CD4-positive, alpha-beta memory T cell (primary cell): ENCODE measurements at regions of chr7 and their contacts with region 1.

Region 1: DNA sequence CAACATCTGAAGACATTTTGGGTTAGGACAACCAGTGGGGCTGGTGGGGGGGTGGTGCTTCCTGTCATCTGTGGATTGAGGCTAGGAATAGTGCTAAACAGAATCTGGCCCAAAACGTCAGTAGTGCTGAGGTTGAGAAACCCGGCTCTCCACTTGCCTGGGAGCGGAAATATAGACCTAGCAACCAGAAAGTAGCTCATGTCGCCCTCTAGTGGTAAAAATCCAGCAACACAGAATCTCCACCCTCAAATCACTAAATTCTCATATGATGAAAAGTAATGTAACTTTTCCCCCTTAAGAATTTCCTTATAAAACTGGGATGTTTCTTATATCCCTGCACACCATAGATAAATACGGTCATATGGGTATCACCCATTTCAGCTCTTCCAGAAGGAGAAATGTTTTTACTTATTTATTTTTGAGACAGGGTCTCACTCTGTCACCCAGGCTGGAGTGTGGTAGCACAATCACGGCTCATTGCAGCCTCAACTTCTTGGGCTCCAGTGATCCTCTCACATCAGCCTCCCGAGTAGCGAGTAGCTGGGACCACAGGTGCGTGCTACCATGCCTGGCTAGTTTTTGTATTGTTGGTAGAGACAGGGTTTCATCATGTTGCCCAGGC is 34.4 kb downstream of the ZC3HAV1 start:
- DNase-seq: peak; percentile 77 to 84 (median 80)
- H3K4me3 ChIP-seq: no peak overlapping the region
- H3K4me3 Mint-ChIP-seq: peak overlapping the region; percentile 53 to 75 (median 58)
- H3K27ac ChIP-seq: peak overlapping the region; percentile 27
- H3K27ac Mint-ChIP-seq: peak overlapping the region; percentile 86 to 91 (median 88)
- H3K4me1 ChIP-seq: peaks cover 61% of the 10 kb centered on the region
- H3K4me1 Mint-ChIP-seq: peaks cover 38 to 82% (median 59%) of the 10 kb centered on the region in 4 donors
- H3K27me3 ChIP-seq: no peaks in the 10 kb centered on the region
- H3K27me3 Mint-ChIP-seq: no peaks in the 10 kb centered on the region

Region 2: GRCh38 chr7:139043823-139044812 is 31.0 kb before region 1 on chr7:
- CTCF ChIA-PET with region 1: interaction called, 15 read pairs
- POLR2A ChIA-PET with region 1: interaction called, 4 read pairs
- intact Hi-C with region 1: loop called (anchors 2 kb)
- DNase-seq: peak; percentile 60 to 92 (median 68)
- H3K4me3 ChIP-seq: no peak overlapping the region
- H3K4me3 Mint-ChIP-seq: peak overlapping the region in 6 of 8 donors; percentile 51 to 77 (median 65)
- H3K27ac ChIP-seq: peak overlapping the region; percentile 15
- H3K27ac Mint-ChIP-seq: peak overlapping the region; percentile 57 to 93 (median 86)
- H3K4me1 ChIP-seq: peaks cover 61% of the 10 kb centered on the region
- H3K4me1 Mint-ChIP-seq: peaks cover 47 to 81% (median 61%) of the 10 kb centered on the region in 4 donors
- H3K27me3 ChIP-seq: no peaks in the 10 kb centered on the region
- H3K27me3 Mint-ChIP-seq: no peaks in the 10 kb centered on the region

Region 3: GRCh38 chr7:139086454-139086853 is 11.3 kb after region 1 on chr7:
- CTCF ChIA-PET with region 1: interaction called, 30 read pairs
- POLR2A ChIA-PET with region 1: interaction called, 244 read pairs
- intact Hi-C with region 1: no loop called
- DNase-seq: no peak
- H3K4me3 ChIP-seq: no peak overlapping the region
- H3K4me3 Mint-ChIP-seq: peak overlapping the region in 5 of 8 donors; percentile 13 to 87 (median 38)
- H3K27ac ChIP-seq: peak overlapping the region; percentile 6
- H3K27ac Mint-ChIP-seq: peak overlapping the region in 6 of 7 donors; percentile 67 to 92 (median 84)
- H3K4me1 ChIP-seq: peaks cover 95% of the 10 kb centered on the region
- H3K4me1 Mint-ChIP-seq: peaks cover 55 to 94% (median 79%) of the 10 kb centered on the region in 4 donors
- H3K27me3 ChIP-seq: no peaks in the 10 kb centered on the region
- H3K27me3 Mint-ChIP-seq: no peaks in the 10 kb centered on the region

Region 4: DNA sequence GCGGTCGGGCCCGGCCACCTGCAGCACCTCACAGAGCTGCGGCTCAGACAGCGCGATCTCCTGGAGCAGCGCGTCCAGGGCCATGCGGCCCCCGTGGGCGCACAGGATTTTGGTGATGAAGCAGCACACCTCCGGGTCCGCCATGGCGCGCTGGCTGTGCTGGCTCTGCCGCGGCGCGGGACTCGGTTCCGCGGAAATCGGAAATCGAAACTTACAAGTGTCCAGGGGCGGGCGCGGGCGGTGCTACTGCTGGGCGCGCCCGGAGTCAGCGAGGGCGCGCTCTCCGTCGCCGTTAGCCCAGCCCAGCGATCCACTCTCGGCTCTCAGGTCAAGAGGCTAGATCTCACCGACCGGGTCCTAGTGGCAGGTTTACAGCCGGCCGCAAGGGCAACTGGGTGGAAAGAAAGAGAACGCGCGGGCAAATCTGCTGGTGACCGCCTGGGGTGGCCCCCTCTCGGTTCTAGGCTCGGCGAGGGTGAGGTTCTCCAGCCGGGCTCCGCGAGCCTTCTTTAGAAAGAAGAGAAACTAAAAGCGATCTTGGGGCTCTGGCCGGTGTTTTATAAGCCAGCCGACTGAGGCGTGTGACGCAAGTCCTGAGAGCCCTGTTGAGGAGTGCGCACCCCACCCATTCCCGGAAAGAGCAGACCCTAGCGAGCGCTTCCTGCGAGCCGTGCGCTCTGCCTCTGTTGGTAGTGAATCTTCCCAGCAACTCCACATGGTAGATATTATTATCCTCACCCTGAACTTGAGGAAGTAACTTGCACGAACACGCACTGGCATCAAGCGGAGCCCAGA is 34.2 kb after region 1 on chr7 and contains the start of gene ZC3HAV1:
- CTCF ChIA-PET with region 1: interaction called, 15 read pairs
- POLR2A ChIA-PET with region 1: interaction called, 23 read pairs
- intact Hi-C with region 1: loop called (anchors 1 kb)
- DNase-seq: peak; percentile 89 to 94 (median 93)
- H3K4me3 ChIP-seq: peak within 1 kb of the TSS; percentile 90 to 96
- H3K4me3 Mint-ChIP-seq: peak within 1 kb of the TSS; percentile 95 to 99 (median 97)
- H3K27ac ChIP-seq: peak within 1 kb of the TSS; percentile 96
- H3K27ac Mint-ChIP-seq: peak within 1 kb of the TSS; percentile 88 to 100 (median 99)
- H3K4me1 ChIP-seq: peaks cover 29% of the 10 kb centered on the region
- H3K4me1 Mint-ChIP-seq: peaks cover 28 to 59% (median 38%) of the 10 kb centered on the region in 4 donors
- H3K27me3 ChIP-seq: no peaks in the 10 kb centered on the region
- H3K27me3 Mint-ChIP-seq: no peaks in the 10 kb centered on the region
- total RNA-seq, gene ZC3HAV1: 154 to 159 TPM

Region 5: GRCh38 chr7:139133335-139134139 is 58.4 kb after region 1 on chr7:
- CTCF ChIA-PET with region 1: interaction called, 26 read pairs
- POLR2A ChIA-PET with region 1: interaction called, 3 read pairs
- intact Hi-C with region 1: no loop called
- DNase-seq: peak; percentile 86 to 89 (median 88)
- H3K4me3 ChIP-seq: peak overlapping the region; percentile 25 to 55
- H3K4me3 Mint-ChIP-seq: peak overlapping the region; percentile 87 to 97 (median 92)
- H3K27ac ChIP-seq: peak overlapping the region; percentile 56
- H3K27ac Mint-ChIP-seq: peak overlapping the region; percentile 73 to 97 (median 93)
- H3K4me1 ChIP-seq: peaks cover 14% of the 10 kb centered on the region
- H3K4me1 Mint-ChIP-seq: peaks cover 5 to 22% (median 17%) of the 10 kb centered on the region in 4 donors
- H3K27me3 ChIP-seq: no peaks in the 10 kb centered on the region
- H3K27me3 Mint-ChIP-seq: no peaks in the 10 kb centered on the region